PC-3 (cell line): ENCODE measurements at regions of chr1 and their contacts with region 1.

Region 1: DNA sequence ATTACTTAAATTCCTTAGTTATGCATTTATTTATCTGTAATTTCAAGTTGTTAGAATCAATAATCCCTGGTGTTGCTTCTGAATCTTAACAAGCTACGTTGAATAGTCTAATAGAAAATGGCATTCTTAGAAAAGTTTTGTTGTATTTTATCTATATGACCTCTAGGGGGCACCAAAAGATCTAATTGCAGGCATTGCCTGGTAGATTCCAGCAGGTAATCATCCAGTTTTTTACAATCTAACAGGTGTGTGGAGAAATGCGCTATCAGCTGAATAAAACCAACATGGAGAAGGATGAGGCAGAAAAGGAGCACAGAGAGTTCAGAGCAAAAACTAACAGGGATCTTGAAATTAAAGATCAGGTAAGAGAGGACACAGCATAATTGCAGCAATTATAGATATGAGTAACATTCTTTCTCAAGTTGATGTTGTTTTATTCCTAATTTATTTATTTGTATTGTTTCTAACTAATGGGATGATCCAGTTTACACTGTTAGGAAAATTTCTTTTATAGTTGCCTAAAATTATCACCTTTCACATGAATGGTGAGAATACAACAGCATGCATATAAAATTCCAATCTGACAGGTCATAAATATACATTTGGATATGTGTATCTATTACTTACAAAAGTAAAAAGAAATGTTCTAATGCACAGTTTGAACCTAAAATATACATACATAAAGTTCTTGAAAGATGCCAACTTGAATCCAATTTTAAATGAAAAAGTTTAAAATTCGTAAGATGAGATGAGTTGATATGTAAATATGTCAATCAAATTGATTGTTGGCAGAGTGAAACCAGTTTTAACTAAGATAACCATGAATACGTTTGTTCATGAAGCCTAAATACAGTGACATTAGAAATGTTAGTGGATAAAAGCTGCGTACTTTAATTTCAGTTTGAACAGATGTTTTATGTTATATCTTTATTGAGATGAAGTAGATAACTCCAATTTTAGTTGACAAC is 88.4 kb downstream of the SDCCAG8 start:
- DNase-seq: peak; percentile 88
- ATAC-seq: peak; percentile 61
- H3K4me3 ChIP-seq: no peak overlapping the region
- H3K27ac ChIP-seq: no peak overlapping the region
- H3K4me1 ChIP-seq: peaks cover 7% of the 10 kb centered on the region
- H3K27me3 ChIP-seq: no peaks in the 10 kb centered on the region
- CTCF ChIP-seq: peak; percentile 98

Region 2: GRCh38 chr1:243325305-243325890 is 18.9 kb before region 1 on chr1:
- CTCF ChIA-PET with region 1: no interaction called
- POLR2A ChIA-PET with region 1: no interaction called
- intact Hi-C with region 1: no loop called
- DNase-seq: peak; percentile 93
- ATAC-seq: peak; percentile 76
- H3K4me3 ChIP-seq: no peak overlapping the region
- H3K27ac ChIP-seq: no peak overlapping the region
- H3K4me1 ChIP-seq: no peaks in the 10 kb centered on the region
- H3K27me3 ChIP-seq: no peaks in the 10 kb centered on the region
- CTCF ChIP-seq: peak; percentile 99

Region 3: GRCh38 chr1:243364866-243365265 is 20.6 kb after region 1 on chr1:
- CTCF ChIA-PET with region 1: no interaction called
- POLR2A ChIA-PET with region 1: no interaction called
- intact Hi-C with region 1: no loop called
- DNase-seq: no peak
- ATAC-seq: no peak
- H3K4me3 ChIP-seq: no peak overlapping the region
- H3K27ac ChIP-seq: no peak overlapping the region
- H3K4me1 ChIP-seq: no peaks in the 10 kb centered on the region
- H3K27me3 ChIP-seq: no peaks in the 10 kb centered on the region
- CTCF ChIP-seq: no peak

Region 4: DNA sequence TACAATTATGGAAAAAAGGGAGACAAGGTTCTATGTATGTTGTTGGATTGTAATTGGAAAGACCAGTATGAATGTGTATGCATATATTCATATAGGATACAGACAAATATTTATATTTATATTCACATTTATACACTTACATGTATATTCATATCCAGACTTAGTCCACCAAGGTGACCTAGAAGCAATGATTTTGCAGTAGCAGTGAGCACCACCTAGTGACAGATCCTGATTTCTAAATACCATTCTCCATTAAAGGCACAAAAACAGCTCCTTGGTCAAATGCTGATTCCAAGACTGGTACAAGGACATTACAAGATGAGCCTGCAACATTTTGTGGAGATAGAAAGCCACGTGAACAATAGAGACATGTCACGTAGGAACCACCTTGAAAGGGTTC is 65.0 kb after region 1 on chr1:
- CTCF ChIA-PET with region 1: interaction called, 3 read pairs
- POLR2A ChIA-PET with region 1: no interaction called
- intact Hi-C with region 1: loop called (anchors 1 kb)
- DNase-seq: peak; percentile 61
- ATAC-seq: peak; percentile 62; the same call in 1 of the 2 replicates
- H3K4me3 ChIP-seq: no peak overlapping the region
- H3K27ac ChIP-seq: no peak overlapping the region
- H3K4me1 ChIP-seq: no peaks in the 10 kb centered on the region
- H3K27me3 ChIP-seq: no peaks in the 10 kb centered on the region
- CTCF ChIP-seq: peak; percentile 75

Region 5: DNA sequence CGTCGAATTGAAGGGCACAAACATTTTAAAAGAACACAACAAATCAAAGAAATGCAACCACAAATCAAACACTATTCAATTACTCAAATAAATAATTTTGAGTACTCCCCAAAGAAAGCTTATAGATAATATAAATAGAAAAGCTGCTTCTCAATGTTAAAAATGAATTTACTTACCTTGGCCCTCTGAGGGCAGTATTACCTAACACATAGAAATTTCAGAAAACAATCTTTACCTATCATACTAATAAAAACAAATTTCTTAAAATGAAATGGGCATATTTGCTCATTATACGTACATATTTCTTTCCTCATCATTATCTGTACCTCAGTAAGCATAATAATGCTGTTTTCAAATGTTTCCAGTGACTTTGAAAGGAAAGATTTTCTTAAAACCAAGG is 364.0 kb after region 1 on chr1:
- CTCF ChIA-PET with region 1: no interaction called
- POLR2A ChIA-PET with region 1: no interaction called
- intact Hi-C with region 1: loop called (anchors 5 kb)
- DNase-seq: peak; percentile 50
- ATAC-seq: no peak
- H3K4me3 ChIP-seq: no peak overlapping the region
- H3K27ac ChIP-seq: no peak overlapping the region
- H3K4me1 ChIP-seq: peaks cover 15% of the 10 kb centered on the region
- H3K27me3 ChIP-seq: no peaks in the 10 kb centered on the region
- CTCF ChIP-seq: peak; percentile 86

Region 6: DNA sequence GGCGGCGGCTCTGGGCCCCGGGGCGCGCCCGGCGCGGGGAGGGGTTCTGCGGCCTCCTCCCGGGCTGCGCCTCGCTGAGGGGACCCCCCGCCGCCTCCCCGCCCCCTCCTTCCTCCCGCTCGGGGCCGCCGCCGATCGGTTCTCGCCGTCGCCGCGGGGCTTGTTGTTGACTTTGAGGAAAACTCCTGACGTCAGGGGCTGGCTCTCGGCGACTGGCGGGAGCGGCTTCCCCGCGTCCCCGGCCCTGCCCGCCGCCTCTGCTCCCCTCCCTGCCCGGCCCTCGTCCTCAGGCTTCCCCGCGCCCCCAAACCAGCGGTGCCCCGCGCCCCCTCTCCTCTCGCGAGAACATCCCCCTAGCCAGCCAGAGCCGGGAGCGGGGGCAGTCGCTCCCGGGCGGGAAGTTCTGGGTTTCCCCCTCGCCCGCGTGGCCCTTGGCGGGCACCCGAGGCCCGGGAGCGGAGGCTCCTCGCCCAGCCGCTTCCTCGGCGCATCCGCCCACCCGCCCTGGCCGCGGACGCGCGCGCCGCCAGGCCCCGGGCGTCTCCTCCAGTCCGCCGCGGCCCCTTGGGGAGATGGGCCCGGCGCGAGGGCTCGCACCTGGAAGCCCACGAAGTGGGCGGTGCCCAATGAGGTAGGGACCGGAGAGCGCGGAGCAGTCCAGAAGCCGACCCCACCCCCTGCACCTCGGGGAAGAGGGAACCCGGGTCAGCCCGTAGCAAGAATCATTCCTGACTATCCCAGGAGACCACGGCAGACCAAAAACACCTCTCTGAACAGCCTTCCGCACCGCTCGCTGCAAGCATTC is 506.4 kb after region 1 on chr1:
- CTCF ChIA-PET with region 1: no interaction called
- POLR2A ChIA-PET with region 1: no interaction called
- intact Hi-C with region 1: loop called (anchors 10 kb)
- DNase-seq: peak; percentile 84
- ATAC-seq: peak; percentile 59
- H3K4me3 ChIP-seq: peak overlapping the region; percentile 70
- H3K27ac ChIP-seq: peak overlapping the region; percentile 88
- H3K4me1 ChIP-seq: peaks cover 29% of the 10 kb centered on the region
- H3K27me3 ChIP-seq: no peaks in the 10 kb centered on the region
- CTCF ChIP-seq: no peak

Region 7: DNA sequence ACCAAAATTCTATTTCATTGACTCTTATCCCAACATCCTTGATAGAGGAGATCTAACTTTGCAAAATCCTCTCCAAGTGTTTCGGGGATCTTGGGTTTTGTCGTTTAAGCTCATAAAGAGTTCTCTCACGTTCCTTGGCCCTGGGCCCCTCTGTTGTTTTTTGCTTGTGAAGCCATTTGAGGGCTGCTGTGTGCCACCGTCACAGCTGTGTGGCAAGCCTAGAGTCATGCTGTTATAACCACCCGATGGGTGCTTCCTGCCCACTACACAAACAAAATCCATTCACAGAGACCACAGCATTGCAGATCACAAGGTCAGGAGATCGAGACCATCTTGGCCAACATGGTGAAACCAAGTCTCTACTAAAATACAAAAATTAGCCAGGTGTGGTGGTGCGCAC is 953.4 kb after region 1 on chr1:
- CTCF ChIA-PET with region 1: interaction called, 3 read pairs
- POLR2A ChIA-PET with region 1: no interaction called
- intact Hi-C with region 1: loop called (anchors 2 kb)
- DNase-seq: no peak
- ATAC-seq: no peak
- H3K4me3 ChIP-seq: no peak overlapping the region
- H3K27ac ChIP-seq: no peak overlapping the region
- H3K4me1 ChIP-seq: peaks cover 7% of the 10 kb centered on the region
- H3K27me3 ChIP-seq: no peaks in the 10 kb centered on the region
- CTCF ChIP-seq: no peak